SK-N-SH (cell line): ENCODE measurements at regions of chr19 and their contacts with region 1.

Region 1: GRCh38 chr19:50329146-50329925 is at the start of gene KCNC3:
- DNase-seq: peak; percentile 95
- H3K4me3 ChIP-seq: peak within 1 kb of the TSS; percentile 49 to 67
- H3K27ac ChIP-seq: peak within 1 kb of the TSS; percentile 75 to 86
- H3K4me1 ChIP-seq: peaks cover 7 to 56% of the 10 kb centered on the region in 2 experiments; a peak in 2 of 4 replicates
- H3K27me3 ChIP-seq: peaks cover 16% of the 10 kb centered on the region; the same call in 1 of the 2 replicates
- CTCF ChIP-seq: no peak
- EP300 ChIP-seq: no peak
- RAD21 ChIP-seq: no peak
- polyA plus RNA-seq, gene KCNC3: 0.26 and 0.30 TPM in 2 replicates

Region 2: DNA sequence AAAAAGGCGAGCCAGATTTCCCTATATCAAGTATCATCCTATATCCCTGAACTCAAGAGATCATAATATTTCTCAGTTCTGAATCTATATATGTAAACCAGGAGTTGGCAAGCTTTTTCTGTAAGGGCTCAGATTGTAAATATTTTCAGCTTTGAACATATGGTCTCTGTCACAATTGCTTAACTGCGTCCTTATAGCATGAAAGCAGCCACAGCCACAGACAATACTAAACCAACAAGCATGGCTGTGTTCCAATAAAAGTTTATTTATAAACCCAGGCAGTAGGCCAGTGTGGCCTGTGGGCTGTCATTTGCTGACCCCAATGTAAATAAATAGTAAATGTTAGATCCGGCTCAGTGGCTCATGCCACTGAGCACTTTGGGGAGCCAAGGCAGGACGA is 138.1 kb before region 1 on chr19:
- CTCF ChIA-PET with region 1: no interaction called
- POLR2A ChIA-PET with region 1: no interaction called
- DNase-seq: no peak
- H3K4me3 ChIP-seq: no peak overlapping the region
- H3K27ac ChIP-seq: no peak overlapping the region
- H3K4me1 ChIP-seq: no peaks in the 10 kb centered on the region
- H3K27me3 ChIP-seq: peaks cover 56% of the 10 kb centered on the region
- CTCF ChIP-seq: no peak
- EP300 ChIP-seq: no peak
- RAD21 ChIP-seq: no peak

Region 3: GRCh38 chr19:50252111-50252886 is 77.0 kb before region 1 on chr19:
- CTCF ChIA-PET with region 1: interaction called, 17 read pairs
- POLR2A ChIA-PET with region 1: no interaction called
- DNase-seq: peak; percentile 65
- H3K4me3 ChIP-seq: no peak overlapping the region
- H3K27ac ChIP-seq: no peak overlapping the region
- H3K4me1 ChIP-seq: no peaks in the 10 kb centered on the region
- H3K27me3 ChIP-seq: peaks cover 39% of the 10 kb centered on the region; the same call in 1 of the 2 replicates
- CTCF ChIP-seq: peak; percentile 70
- EP300 ChIP-seq: no peak
- RAD21 ChIP-seq: peak; percentile 66

Region 4: DNA sequence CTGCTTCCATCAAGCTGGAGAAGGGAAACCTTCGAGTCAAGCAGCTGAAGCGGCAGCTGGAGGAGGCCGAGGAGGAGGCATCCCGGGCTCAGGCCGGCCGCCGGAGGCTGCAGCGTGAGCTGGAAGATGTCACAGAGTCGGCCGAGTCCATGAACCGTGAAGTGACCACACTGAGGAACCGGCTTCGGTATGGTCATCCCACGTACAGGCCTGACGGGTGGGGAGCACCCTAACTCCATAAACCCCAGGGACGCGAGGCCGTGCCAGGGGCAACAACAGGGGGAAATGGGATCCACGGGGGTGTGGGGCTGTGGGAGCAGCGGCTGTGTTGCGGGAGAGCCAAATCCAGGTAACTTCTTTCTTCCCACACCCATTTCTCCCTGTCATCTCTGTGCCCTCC is 20.3 kb before region 1 on chr19:
- CTCF ChIA-PET with region 1: interaction called, 10 read pairs
- POLR2A ChIA-PET with region 1: interaction called, 3 read pairs
- DNase-seq: no peak
- H3K4me3 ChIP-seq: no peak overlapping the region
- H3K27ac ChIP-seq: no peak overlapping the region
- H3K4me1 ChIP-seq: no peaks in the 10 kb centered on the region; a peak in 1 of 4 replicates
- H3K27me3 ChIP-seq: peaks cover 52% of the 10 kb centered on the region
- CTCF ChIP-seq: no peak
- EP300 ChIP-seq: no peak
- RAD21 ChIP-seq: no peak

Region 5: DNA sequence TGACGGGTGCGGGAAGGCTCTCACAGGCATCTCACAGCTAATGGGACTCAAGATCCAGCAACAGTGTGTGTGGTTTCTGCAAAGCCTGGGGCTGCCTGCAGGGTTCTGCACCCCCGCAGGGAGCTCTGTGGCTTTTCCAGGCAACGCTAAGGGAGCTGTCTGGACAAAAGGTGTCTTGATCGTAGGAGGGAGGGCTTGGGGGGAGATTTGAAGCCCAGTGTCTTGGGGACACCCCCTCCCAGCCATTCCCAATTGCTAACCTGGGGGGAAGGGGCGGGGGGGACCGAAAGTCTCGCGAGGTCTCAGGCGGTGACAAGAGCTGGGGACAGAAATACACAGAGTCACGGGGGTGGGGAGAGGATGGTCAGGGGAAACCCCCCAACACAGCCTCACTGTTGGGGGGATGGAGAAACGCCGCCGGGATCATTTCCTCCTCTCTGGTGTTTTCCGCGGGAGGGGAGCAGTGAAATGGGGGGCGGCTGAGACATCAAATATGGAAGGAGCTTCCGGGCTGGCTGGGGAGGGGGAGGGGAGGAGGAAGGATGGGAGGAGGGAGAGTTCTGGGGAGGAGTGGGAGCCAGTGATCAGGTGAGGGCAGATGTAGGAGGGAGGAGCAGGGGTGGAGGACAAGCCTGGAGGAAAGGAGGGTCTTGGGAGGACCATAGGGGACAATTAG is 13.4 kb before region 1 on chr19:
- CTCF ChIA-PET with region 1: interaction called, 15 read pairs
- POLR2A ChIA-PET with region 1: interaction called, 13 read pairs
- DNase-seq: peak; percentile 84
- H3K4me3 ChIP-seq: peak overlapping the region; percentile 38 to 44
- H3K27ac ChIP-seq: peak overlapping the region in 1 of 2 experiments; percentile 77; a peak in 2 of 4 replicates
- H3K4me1 ChIP-seq: peaks cover 0 to 2% of the 10 kb centered on the region in 2 experiments; a peak in 1 of 4 replicates
- H3K27me3 ChIP-seq: peaks cover 33% of the 10 kb centered on the region
- CTCF ChIP-seq: peak; percentile 24; the same call in 1 of the 2 replicates
- EP300 ChIP-seq: no peak
- RAD21 ChIP-seq: no peak

Region 6: DNA sequence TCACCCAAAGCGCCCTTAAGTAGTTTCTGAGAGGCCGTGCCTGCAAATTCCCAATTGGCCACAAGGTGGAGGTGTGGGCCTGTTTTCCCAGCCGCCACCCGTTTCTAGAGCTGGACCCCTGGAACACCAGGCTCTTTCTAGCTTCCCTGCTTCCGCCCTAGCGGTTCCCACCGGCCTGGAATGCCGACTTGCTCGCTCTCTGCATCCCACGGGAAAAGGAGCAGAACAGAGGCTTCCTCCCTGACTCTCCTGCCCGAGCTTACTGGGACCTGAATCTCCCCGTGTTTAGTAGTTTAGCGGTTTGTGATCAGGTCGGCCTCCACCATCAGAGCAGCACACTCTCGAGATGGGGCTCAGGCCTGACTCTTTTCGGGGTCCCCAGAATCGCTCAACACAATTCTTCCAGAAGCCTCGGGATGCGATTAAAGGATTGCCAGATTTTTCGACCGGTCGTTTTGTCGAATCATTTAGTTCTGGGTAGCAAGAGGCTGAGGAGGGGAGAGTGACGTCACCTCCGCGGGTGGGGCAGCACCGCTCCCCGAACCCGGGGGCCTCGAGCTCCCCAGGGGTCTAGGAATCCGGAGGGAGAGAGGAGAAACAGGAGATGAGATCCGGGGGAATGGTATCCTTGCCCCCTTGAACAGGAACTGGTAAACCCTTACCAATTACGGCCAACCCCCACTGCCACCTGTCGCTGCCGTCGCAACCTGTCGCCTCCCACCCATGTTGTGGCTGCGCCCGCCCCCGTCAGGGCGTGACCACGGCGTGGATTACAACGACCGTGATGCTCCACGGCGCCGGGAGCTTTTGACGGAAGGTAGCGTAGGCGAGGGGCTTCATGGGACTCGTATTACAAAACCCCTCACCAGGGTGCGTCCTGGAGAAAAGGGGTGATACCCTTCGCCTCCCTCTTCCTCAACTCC is 28.1 kb after region 1 on chr19:
- CTCF ChIA-PET with region 1: interaction called, 33 read pairs
- POLR2A ChIA-PET with region 1: interaction called, 8 read pairs
- DNase-seq: peak; percentile 70
- H3K4me3 ChIP-seq: peak overlapping the region; percentile 43 to 52
- H3K27ac ChIP-seq: peak overlapping the region in 1 of 2 experiments; percentile 67; a peak in 2 of 4 replicates
- H3K4me1 ChIP-seq: peaks cover 0 to 4% of the 10 kb centered on the region in 2 experiments; a peak in 1 of 4 replicates
- H3K27me3 ChIP-seq: no peaks in the 10 kb centered on the region
- CTCF ChIP-seq: peak; percentile 82
- EP300 ChIP-seq: no peak
- RAD21 ChIP-seq: peak; percentile 78